HepG2 (cell line): ENCODE measurements at regions of chr17 and their contacts with region 1.

Region 1: DNA sequence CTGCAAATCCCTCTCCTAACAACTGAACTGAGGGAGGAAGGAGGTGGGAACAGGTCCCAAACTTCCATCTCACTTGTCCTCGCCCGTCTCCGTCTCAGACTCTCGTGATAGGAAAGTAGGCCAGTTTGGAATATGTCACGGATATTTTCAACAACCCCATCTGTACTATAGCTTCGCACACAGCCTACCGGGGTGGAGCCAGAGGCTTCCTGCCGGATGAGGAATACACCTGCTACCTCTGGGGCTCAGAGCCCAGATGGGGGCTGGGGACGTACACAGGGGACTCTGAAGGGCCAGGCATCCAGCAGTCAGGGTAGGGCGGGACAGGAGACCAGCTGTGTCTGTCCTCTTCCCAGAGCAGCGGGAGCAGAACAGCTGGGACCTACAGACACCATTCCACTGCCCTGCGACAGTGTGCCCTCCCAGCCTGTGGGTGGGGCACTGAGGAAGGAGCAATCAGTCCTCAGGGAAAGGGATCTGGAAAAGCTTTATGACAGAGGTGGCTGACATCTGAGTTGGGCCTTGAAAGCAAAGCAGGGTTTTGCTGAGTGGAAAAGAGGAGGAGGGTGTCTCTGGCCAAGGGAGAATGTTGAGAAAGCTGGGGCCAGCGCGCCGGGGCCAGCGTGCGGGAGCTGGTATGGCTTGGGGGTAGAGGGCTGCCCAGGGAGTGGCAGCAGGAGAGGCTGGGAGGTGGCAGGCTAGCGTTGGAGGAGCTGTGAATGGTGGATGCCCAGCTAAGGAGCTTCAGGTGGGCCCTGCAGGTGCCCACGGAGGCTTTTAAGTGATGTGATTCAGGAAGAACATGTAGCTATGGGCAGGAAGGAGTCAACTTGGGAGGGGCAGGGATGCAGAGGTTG is 11.5 kb upstream of the SRCIN1 start:
- DNase-seq: no peak
- ATAC-seq: no peak
- H3K4me3 ChIP-seq: no peak overlapping the region
- H3K27ac ChIP-seq: peak overlapping the region; percentile 95
- H3K4me1 ChIP-seq: peaks cover 100% of the 10 kb centered on the region
- H3K27me3 ChIP-seq: no peaks in the 10 kb centered on the region
- CTCF ChIP-seq: 0 out of 2 replicates have a peak, but pooled peaks have one; percentile 13
- EP300 ChIP-seq: no peak; a peak in 1 of 4 replicates
- POLR2A ChIP-seq: no peak
- RAD21 ChIP-seq: no peak; the same call in 1 of the 2 replicates

Region 2: GRCh38 chr17:38557836-38558727 is 59.2 kb before region 1 on chr17:
- CTCF ChIA-PET with region 1: no interaction called
- POLR2A ChIA-PET with region 1: interaction called, 29 read pairs
- in situ Hi-C with region 1: no loop called
- intact Hi-C with region 1: no loop called
- DNase-seq: peak; percentile 89
- ATAC-seq: peak; percentile 79
- H3K4me3 ChIP-seq: peak overlapping the region; percentile 19 to 67 (median 51); a peak in 5 of 6 replicates
- H3K27ac ChIP-seq: no peak overlapping the region
- H3K4me1 ChIP-seq: peaks cover 39% of the 10 kb centered on the region
- H3K27me3 ChIP-seq: peaks cover 0 to 2% of the 10 kb centered on the region in 2 experiments; a peak in 1 of 5 replicates
- CTCF ChIP-seq: peak; percentile 100
- EP300 ChIP-seq: no peak
- POLR2A ChIP-seq: no peak
- RAD21 ChIP-seq: peak; percentile 99

Region 3: GRCh38 chr17:38605888-38606645 is 11.2 kb before region 1 on chr17 and contains the start of gene SRCIN1:
- CTCF ChIA-PET with region 1: interaction called, 20 read pairs
- POLR2A ChIA-PET with region 1: interaction called, 143 read pairs
- in situ Hi-C with region 1: no loop called
- intact Hi-C with region 1: no loop called
- DNase-seq: peak; percentile 57
- ATAC-seq: peak; percentile 42
- H3K4me3 ChIP-seq: peak within 1 kb of the TSS; percentile 76 to 84 (median 83)
- H3K27ac ChIP-seq: peak within 1 kb of the TSS; percentile 88
- H3K4me1 ChIP-seq: peaks cover 89% of the 10 kb centered on the region
- H3K27me3 ChIP-seq: no peaks in the 10 kb centered on the region
- CTCF ChIP-seq: peak; percentile 95
- EP300 ChIP-seq: 0 out of 4 replicates have a peak, but pooled peaks have one; percentile 28 to 30
- POLR2A ChIP-seq: peak; percentile 45 to 62; a peak in 3 of 4 replicates
- RAD21 ChIP-seq: peak; percentile 100
- total RNA-seq, gene SRCIN1: 0.90 and 1.2 TPM in 2 replicates

Region 4: GRCh38 chr17:38660097-38661025 is 43.1 kb after region 1 on chr17:
- CTCF ChIA-PET with region 1: interaction called, 4 read pairs
- POLR2A ChIA-PET with region 1: interaction called, 291 read pairs
- in situ Hi-C with region 1: no loop called
- intact Hi-C with region 1: loop called (anchors 1 kb)
- DNase-seq: no peak
- ATAC-seq: no peak
- H3K4me3 ChIP-seq: no peak overlapping the region
- H3K27ac ChIP-seq: peak overlapping the region; percentile 75
- H3K4me1 ChIP-seq: peaks cover 85% of the 10 kb centered on the region
- H3K27me3 ChIP-seq: no peaks in the 10 kb centered on the region
- CTCF ChIP-seq: no peak
- EP300 ChIP-seq: no peak
- POLR2A ChIP-seq: no peak
- RAD21 ChIP-seq: 0 out of 2 replicates have a peak, but pooled peaks have one; percentile 19

Region 5: GRCh38 chr17:38674749-38675615 is 57.7 kb after region 1 on chr17 and contains the start of gene EPOP:
- CTCF ChIA-PET with region 1: no interaction called
- POLR2A ChIA-PET with region 1: interaction called, 10 read pairs
- in situ Hi-C with region 1: no loop called
- intact Hi-C with region 1: no loop called
- DNase-seq: peak; percentile 86
- ATAC-seq: peak; percentile 82
- H3K4me3 ChIP-seq: peak within 1 kb of the TSS; percentile 75 to 94 (median 89)
- H3K27ac ChIP-seq: peak within 1 kb of the TSS; percentile 60
- H3K4me1 ChIP-seq: peaks cover 77% of the 10 kb centered on the region
- H3K27me3 ChIP-seq: peaks cover 2 to 6% of the 10 kb centered on the region in 2 experiments; a peak in 4 of 5 replicates
- CTCF ChIP-seq: 0 out of 2 replicates have a peak, but pooled peaks have one; percentile 8
- EP300 ChIP-seq: 0 out of 4 replicates have a peak, but pooled peaks of 1 of the 2 experiments have one; percentile 5
- POLR2A ChIP-seq: peak; percentile 69 to 88
- RAD21 ChIP-seq: 0 out of 2 replicates have a peak, but pooled peaks have one; percentile 5
- total RNA-seq, gene EPOP: 29.0 and 37.8 TPM in 2 replicates

Region 6: GRCh38 chr17:38844261-38844757 is 227.1 kb after region 1 on chr17:
- CTCF ChIA-PET with region 1: no interaction called
- POLR2A ChIA-PET with region 1: no interaction called
- in situ Hi-C with region 1: no loop called
- intact Hi-C with region 1: no loop called
- DNase-seq: peak; percentile 51
- ATAC-seq: peak; percentile 23
- H3K4me3 ChIP-seq: peak overlapping the region in 2 of 3 experiments; percentile 13 to 30; a peak in 2 of 6 replicates
- H3K27ac ChIP-seq: peak overlapping the region; percentile 52
- H3K4me1 ChIP-seq: peaks cover 40% of the 10 kb centered on the region
- H3K27me3 ChIP-seq: no peaks in the 10 kb centered on the region
- CTCF ChIP-seq: no peak
- EP300 ChIP-seq: peak in 1 of 2 experiments; percentile 8; a peak in 1 of 4 replicates
- POLR2A ChIP-seq: no peak
- RAD21 ChIP-seq: no peak